ENCODE measurements at regions of chr1 and their contacts with region 1.

Region 1: DNA sequence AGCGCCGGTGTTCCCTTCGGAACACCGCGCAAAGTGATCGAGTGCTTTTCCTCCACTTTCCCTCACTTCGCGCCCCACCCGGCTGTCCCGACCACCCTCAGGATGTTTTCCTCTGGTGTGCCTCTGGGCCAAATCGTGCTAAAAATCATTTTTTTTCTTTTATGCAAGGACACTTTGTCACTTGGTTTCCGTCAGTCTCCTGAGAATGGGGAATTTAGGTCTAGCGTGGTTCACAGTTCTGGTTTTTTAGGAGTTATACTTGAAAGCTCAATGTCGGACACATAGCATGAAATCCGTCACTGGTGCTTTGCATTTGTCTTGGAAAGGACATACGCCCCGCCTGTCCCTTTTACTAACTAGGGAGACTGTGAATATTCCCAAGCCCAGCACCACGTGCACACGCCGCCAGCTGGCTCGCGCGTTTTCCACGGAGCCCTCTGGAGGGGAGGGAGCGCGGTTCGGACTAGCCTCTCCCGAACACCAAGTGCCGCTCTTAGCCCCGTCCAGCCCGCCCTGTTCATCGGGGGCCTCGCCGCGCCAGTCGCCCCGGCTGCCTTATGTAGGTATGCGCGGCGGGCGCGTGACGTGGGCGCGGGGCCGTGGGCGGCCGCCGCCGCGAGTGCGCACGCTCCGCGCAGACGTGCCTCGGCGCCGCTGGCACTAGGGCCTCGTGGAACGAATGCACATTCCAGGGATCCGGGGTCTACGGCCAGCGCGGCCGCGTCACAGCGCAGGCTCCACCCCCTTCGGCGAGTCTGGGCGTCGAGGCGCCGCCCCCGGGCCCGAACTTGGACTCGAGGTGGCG is 572 bp upstream of the IRF2BP2 start:
- DNase-seq: peak; percentile 86
- H3K4me3 Mint-ChIP-seq: peak overlapping the region; percentile 88
- H3K27ac Mint-ChIP-seq: peak overlapping the region; percentile 98
- H3K4me1 Mint-ChIP-seq: peaks cover 39% of the 10 kb centered on the region
- H3K27me3 Mint-ChIP-seq: peaks cover 2% of the 10 kb centered on the region

Region 2: DNA sequence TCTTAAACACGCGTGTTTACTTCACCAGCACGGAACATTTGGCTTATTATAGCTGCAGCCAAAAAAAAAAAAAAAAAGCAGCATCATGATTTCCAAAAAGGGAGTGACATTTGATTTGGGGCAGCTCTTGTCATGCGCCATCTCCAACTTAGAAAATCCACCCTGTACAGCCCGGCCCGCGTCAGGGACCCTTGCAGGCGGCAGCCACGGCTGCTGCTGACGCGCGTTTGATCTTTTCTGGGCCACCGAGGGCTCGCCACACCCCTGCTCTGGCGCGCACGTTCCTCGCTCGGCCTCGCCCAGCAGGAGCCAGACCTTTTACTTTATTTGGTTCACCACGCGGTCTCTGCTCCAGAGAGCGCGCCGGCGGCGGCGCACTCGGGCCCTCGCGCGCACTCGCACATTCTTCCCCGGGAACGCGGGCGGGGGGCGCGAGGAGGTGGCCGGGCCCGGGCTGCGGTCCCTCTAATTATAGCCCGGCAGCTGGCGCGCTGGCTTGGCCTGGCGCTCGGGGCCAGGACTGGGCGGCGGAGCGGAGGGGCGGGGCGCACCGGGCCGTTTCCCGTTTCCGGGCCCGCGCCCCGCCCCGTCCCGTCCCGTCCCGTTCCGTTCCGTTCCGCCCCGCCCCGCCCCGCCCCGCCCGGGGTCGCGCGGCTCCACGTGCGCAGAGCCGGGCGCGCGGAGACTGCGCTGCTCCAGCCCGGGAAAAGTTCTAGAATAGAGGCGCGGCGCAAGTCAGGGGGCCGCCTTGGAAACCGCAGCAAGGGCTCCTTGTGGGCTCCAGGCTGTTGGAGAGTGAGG is 10.7 kb before region 1 on chr1:
- intact Hi-C with region 1: loop called (anchors 1 kb)
- DNase-seq: peak; percentile 70
- H3K4me3 Mint-ChIP-seq: peak overlapping the region; percentile 82
- H3K27ac Mint-ChIP-seq: peak overlapping the region; percentile 92
- H3K4me1 Mint-ChIP-seq: peaks cover 53% of the 10 kb centered on the region
- H3K27me3 Mint-ChIP-seq: no peaks in the 10 kb centered on the region

Region 3: GRCh38 chr1:234730770-234731568 is 120.4 kb after region 1 on chr1:
- intact Hi-C with region 1: loop called (anchors 1 kb)
- DNase-seq: peak; percentile 36
- H3K4me3 Mint-ChIP-seq: no peak overlapping the region
- H3K27ac Mint-ChIP-seq: peak overlapping the region; percentile 97
- H3K4me1 Mint-ChIP-seq: peaks cover 74% of the 10 kb centered on the region
- H3K27me3 Mint-ChIP-seq: no peaks in the 10 kb centered on the region

Region 4: DNA sequence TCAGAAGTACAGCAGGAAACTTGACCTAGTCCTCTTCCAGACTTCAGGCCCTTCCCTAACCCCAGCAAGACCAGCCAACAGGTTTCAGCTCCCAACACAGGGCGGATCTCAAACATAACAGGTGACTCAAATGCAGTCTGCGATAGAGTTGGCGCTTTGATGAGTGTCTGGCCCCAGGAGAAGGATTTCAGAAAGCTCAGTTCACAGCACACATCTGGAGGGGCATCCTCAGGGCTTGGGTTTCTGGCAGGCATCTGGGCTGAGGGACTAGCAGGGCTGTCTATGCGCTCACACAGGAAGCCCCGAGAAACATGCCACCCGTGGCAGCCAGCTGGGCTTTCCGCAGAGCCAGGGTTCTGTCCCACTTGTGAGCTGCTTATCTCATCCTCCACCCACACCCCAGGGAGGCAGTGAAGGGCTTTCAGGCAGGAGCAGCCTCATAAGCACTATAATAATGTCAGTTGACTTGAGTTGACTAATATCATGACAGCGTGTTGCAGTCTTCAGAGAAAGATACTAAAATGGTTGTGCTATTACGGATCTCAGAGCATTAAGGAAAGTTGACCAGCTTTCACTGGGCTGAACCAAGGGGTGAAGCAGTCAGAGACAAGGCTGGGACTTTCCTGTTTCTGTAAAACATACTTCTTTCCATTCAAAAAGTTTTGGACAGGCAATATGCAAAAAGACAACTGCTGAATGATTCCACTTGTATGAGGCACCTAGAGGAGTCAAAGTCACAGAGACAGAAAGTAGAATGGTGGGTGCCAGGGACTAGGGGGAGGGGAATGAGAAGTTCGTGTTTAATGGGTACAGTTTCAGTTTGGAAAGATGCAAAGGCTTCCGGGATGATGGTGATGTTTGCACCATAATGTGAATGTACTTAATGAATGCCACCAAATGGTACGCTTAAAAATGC is 232.4 kb after region 1 on chr1:
- intact Hi-C with region 1: loop called (anchors 1 kb)
- DNase-seq: peak; percentile 57
- H3K4me3 Mint-ChIP-seq: peak overlapping the region; percentile 77
- H3K27ac Mint-ChIP-seq: peak overlapping the region; percentile 90
- H3K4me1 Mint-ChIP-seq: peaks cover 93% of the 10 kb centered on the region
- H3K27me3 Mint-ChIP-seq: no peaks in the 10 kb centered on the region

Region 5: DNA sequence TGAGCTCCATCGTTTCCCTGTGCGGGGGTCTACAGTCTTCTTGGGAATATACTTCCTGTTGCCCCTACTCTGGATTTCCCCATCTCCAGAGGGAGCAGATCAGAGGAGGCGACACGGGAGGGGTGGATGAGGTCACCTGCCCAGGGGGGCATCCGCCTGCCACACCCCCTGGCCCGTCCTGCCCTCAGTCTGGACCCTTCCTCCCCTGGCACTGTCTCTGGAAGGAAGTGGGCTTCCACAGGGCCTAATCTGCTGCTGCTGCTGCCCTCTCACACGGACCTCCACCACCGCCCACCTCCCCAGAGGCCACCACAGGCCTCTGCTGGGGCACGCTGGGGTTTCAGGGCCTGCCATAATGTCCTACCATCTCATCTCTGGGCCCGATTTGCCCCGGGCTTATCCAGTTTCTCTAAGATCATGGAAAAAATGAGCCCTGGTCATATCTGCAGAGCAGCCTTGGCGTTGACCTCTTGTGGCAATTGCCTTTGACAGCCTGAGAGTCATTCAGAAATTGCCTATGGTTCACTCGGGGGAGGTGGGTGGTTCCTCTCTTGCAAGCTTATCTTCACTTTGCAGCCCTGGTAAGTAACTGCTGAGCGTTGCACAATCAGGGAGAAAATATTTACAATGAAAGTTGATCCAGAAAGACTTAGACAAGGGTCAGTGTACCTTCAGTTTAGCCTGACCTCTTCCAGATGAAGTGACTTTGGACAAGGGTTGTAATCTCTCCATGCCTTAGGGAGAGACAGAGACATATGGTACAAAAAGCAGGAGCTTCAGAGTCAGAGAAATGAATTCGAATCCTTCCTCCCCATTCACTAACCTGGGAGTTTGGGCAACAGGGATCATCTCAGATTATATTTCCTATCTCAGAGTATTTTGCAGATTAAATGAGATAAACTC is 265.7 kb after region 1 on chr1:
- intact Hi-C with region 1: loop called (anchors 2 kb)
- DNase-seq: no peak
- H3K4me3 Mint-ChIP-seq: no peak overlapping the region
- H3K27ac Mint-ChIP-seq: peak overlapping the region; percentile 88
- H3K4me1 Mint-ChIP-seq: peaks cover 63% of the 10 kb centered on the region
- H3K27me3 Mint-ChIP-seq: no peaks in the 10 kb centered on the region